GM18951 (cell line): ENCODE measurements at regions of chrX and their contacts with region 1.

Region 1: DNA sequence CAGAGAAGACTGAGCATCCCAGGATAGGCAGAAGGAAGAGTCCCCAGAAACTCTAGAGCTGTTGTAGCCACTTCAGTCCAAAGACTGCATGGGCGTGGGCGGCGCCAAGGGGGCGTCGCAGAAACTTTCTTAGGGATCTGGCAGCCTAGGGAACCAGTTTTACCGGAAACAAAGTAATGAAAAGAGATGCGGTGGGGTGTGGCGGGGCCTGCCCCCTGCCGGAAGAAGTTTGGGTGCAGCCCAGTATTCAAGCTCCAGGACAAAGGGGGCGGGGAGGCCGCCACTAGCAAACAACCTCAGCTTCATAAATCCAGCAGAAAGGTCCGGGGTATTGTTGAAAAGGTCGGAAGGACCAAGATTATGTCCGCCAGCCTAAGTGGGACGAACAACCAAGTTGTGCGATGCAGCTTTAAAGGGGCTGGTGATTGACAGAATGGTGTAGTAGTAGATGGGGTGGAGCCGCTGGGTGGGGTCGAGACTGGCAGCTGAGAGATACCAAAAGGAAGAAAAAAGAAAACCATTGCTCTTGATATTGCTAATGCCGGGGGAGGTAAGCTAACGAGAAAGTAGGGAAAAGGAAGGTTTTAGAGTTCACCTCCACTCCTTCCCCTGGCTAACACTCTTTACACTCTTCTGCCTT is 190.5 kb downstream of the RRAGB start:
- POLR2A ChIP-seq: peak; percentile 17

Region 2: GRCh38 chrX:55220119-55220794 is 687.8 kb before region 1 on chrX and contains the start of gene PAGE5:
- in situ Hi-C with region 1: no loop called
- POLR2A ChIP-seq: no peak

Region 3: DNA sequence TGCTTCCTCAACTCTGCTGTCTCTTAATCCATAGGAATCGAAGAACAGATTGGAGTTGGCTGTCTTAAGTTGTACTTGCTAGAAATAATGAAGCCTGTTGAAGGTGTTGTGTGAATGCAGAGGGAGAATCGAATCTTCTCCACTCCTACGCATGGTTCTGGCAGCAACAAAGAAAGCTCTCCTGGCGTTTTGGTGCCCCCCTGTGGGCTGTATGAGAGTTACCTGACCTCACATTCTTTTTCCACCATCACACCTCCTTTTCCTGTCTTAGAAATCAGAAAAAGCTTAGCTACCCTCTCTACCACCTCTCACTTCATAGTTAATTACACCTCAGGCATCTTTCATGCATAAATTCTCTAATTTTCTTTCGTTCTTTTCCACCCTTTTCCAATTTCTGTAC is 340.4 kb after region 1 on chrX:
- in situ Hi-C with region 1: loop called (anchors 25 kb)
- POLR2A ChIP-seq: no peak